GM12878 (cell line): ENCODE measurements at regions of chr18 and their contacts with region 1.

Region 1: DNA sequence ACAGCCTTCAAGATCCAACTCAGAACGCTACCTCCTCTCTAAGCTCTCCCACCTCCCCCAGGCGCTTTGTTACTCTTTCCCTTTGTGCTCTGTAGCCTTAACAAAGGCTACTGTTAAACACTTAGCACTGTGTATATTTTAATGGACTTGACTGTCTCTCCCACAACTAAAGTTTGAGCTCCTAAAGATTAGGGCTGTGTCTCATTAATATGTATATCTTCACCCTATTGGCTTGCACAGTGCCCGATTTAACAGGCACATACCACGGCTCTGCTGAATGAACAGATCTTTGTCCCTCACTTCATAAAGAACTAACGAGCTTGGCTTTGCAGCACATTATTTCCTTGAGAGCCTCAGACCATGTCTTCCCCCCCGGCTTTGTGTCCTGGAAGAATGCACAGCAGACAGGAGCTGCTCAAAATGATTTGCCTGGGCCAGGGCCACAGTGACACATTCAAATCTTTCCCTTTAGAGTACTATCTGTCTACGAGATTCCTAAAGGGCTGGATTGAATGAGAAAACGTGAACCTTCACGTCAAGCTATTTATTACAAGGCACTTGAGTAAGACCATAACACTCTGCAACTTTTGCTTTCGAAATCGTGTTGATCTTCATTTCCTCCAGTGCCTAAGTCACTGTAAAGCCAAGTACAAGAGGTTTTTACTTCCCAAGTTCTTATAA is 22.1 kb downstream of the ABHD3 start:
- DNase-seq: peak; percentile 39
- ATAC-seq: peak; percentile 32; the same call in 2 of the 3 replicates
- H3K4me3 ChIP-seq: no peak overlapping the region
- H3K27ac ChIP-seq: peak overlapping the region; percentile 70
- H3K4me1 ChIP-seq: peaks cover 23% of the 10 kb centered on the region
- H3K27me3 ChIP-seq: no peaks in the 10 kb centered on the region
- CTCF ChIP-seq: no peak
- EP300 ChIP-seq: no peak
- POLR2A ChIP-seq: no peak
- RAD21 ChIP-seq: no peak

Region 2: DNA sequence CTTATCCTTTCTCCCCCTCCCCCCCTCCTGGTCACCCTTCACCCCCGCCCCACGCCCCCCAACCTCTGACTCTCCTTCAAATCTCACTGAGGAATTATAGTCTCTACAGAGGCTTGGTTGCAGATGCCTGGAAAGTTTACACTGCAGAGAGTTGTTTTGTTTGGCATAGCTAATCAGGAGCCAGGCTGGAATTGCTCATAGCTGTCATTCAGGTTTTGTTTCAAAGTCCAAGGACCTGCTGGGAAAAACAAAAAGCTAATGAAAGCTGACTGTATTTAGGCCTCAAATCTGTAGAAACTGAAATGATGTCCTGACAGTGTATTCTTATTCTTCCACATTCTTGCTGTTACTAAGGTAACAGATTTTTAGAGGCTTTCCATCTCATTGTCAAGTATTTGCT is 417.9 kb before region 1 on chr18:
- CTCF ChIA-PET with region 1: no interaction called
- POLR2A ChIA-PET with region 1: no interaction called
- RAD21 ChIA-PET with region 1: no interaction called
- SMC1A ChIA-PET with region 1: no interaction called
- in situ Hi-C with region 1: no loop called
- intact Hi-C with region 1: no loop called
- DNase-seq: no peak
- ATAC-seq: no peak
- H3K4me3 ChIP-seq: no peak overlapping the region
- H3K27ac ChIP-seq: no peak overlapping the region
- H3K4me1 ChIP-seq: no peaks in the 10 kb centered on the region
- H3K27me3 ChIP-seq: no peaks in the 10 kb centered on the region; a peak in 1 of 4 replicates
- CTCF ChIP-seq: no peak
- EP300 ChIP-seq: no peak
- POLR2A ChIP-seq: no peak
- RAD21 ChIP-seq: no peak

Region 3: GRCh38 chr18:21452796-21453510 is 229.6 kb before region 1 on chr18:
- CTCF ChIA-PET with region 1: no interaction called
- POLR2A ChIA-PET with region 1: no interaction called
- RAD21 ChIA-PET with region 1: no interaction called
- SMC1A ChIA-PET with region 1: no interaction called
- in situ Hi-C with region 1: no loop called
- intact Hi-C with region 1: no loop called
- DNase-seq: no peak
- ATAC-seq: no peak
- H3K4me3 ChIP-seq: no peak overlapping the region
- H3K27ac ChIP-seq: no peak overlapping the region
- H3K4me1 ChIP-seq: no peaks in the 10 kb centered on the region
- H3K27me3 ChIP-seq: no peaks in the 10 kb centered on the region; a peak in 1 of 4 replicates
- CTCF ChIP-seq: no peak
- EP300 ChIP-seq: no peak
- POLR2A ChIP-seq: no peak
- RAD21 ChIP-seq: no peak

Region 4: GRCh38 chr18:21600526-21601410 is 81.7 kb before region 1 on chr18 and contains the start of gene ESCO1:
- CTCF ChIA-PET with region 1: interaction called, 4 read pairs
- POLR2A ChIA-PET with region 1: interaction called, 3 read pairs
- RAD21 ChIA-PET with region 1: interaction called, 3 read pairs
- SMC1A ChIA-PET with region 1: interaction called, 3 read pairs
- in situ Hi-C with region 1: no loop called
- intact Hi-C with region 1: loop called (anchors 5 kb)
- DNase-seq: peak; percentile 95
- ATAC-seq: peak; percentile 90
- H3K4me3 ChIP-seq: peak within 1 kb of the TSS; percentile 76
- H3K27ac ChIP-seq: peak within 1 kb of the TSS; percentile 90
- H3K4me1 ChIP-seq: peaks cover 27% of the 10 kb centered on the region
- H3K27me3 ChIP-seq: no peaks in the 10 kb centered on the region
- CTCF ChIP-seq: peak; percentile 90 to 95 (median 93)
- EP300 ChIP-seq: no peak; a peak in 1 of 4 replicates
- POLR2A ChIP-seq: peak; percentile 98
- RAD21 ChIP-seq: peak; percentile 38; the same call in 1 of the 2 replicates
- polyA plus RNA-seq, gene ESCO1: 9.6 to 11.2 TPM

Region 5: GRCh38 chr18:21704603-21705364 is 22.3 kb after region 1 on chr18 and contains the start of gene ABHD3:
- CTCF ChIA-PET with region 1: interaction called, 6 read pairs
- POLR2A ChIA-PET with region 1: interaction called, 4 read pairs
- RAD21 ChIA-PET with region 1: interaction called, 11 read pairs
- SMC1A ChIA-PET with region 1: interaction called, 6 read pairs
- in situ Hi-C with region 1: no loop called
- intact Hi-C with region 1: loop called (anchors 2 kb)
- DNase-seq: peak; percentile 55
- ATAC-seq: peak; percentile 97
- H3K4me3 ChIP-seq: peak within 1 kb of the TSS; percentile 76
- H3K27ac ChIP-seq: peak within 1 kb of the TSS; percentile 83
- H3K4me1 ChIP-seq: no peaks in the 10 kb centered on the region
- H3K27me3 ChIP-seq: no peaks in the 10 kb centered on the region
- CTCF ChIP-seq: peak; percentile 27 to 42 (median 35); a peak in 5 of 6 replicates
- EP300 ChIP-seq: no peak
- POLR2A ChIP-seq: peak; percentile 96
- RAD21 ChIP-seq: peak; percentile 23; the same call in 1 of the 2 replicates
- polyA plus RNA-seq, gene ABHD3: 4.9 to 11.9 TPM

Region 6: DNA sequence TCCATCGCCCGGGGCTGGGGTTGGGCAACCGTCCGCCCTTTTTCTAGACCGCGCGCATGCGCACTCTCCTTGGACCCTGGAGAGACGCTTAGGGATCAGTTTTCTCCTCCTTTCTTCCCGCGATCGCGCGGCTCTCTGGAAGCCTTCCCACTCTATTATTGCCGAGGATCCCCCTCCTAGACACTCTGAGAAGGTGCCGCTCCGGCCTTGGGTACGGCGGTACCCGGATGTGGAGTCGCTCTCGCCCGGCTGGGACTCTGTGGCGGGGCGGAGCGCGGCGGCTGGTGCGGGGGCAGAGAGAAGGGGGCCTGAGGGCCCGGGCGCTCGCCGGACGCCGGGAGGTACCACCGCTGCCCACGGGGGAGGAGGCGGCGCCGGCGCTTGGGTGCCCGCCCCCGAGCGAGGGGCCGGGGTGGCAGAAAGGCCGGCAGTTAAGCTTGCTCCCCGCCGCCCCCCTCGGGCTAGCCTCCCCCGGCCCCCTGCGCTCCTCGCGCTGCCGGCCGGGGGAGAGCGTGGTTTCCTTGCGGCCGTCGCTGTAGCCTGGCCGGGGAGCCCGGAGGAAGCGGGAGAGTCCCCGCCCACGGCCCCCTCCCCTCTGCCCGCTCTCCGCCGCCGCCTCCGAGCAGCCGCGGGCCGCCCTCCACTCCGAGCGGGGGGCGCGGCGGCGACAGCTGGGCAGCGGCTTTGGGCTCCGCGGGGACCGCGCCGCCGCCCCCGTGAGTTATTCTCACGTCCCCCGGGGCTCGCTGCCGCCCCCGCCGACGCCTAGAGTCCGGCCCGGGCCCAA is 58.4 kb after region 1 on chr18 and contains the start of gene MIB1:
- CTCF ChIA-PET with region 1: no interaction called
- POLR2A ChIA-PET with region 1: interaction called, 4 read pairs
- RAD21 ChIA-PET with region 1: interaction called, 6 read pairs
- SMC1A ChIA-PET with region 1: interaction called, 7 read pairs
- in situ Hi-C with region 1: no loop called
- intact Hi-C with region 1: loop called (anchors 2 kb)
- DNase-seq: peak; percentile 83
- ATAC-seq: peak; percentile 85
- H3K4me3 ChIP-seq: peak within 1 kb of the TSS; percentile 96
- H3K27ac ChIP-seq: peak within 1 kb of the TSS; percentile 91
- H3K4me1 ChIP-seq: no peaks in the 10 kb centered on the region
- H3K27me3 ChIP-seq: no peaks in the 10 kb centered on the region
- CTCF ChIP-seq: no peak
- EP300 ChIP-seq: no peak
- POLR2A ChIP-seq: peak; percentile 64
- RAD21 ChIP-seq: no peak
- polyA plus RNA-seq, gene MIB1: 3.6 to 4.8 TPM